ENCODE measurements at regions of chr13 and their contacts with region 1.

Region 1: GRCh38 chr13:46278474-46278873 is 66.7 kb downstream of the LRRC63 start:
- DNase-seq: peak in 1 of 2 experiments; percentile 21
- H3K4me3 ChIP-seq: no peak overlapping the region
- H3K27ac ChIP-seq: no peak overlapping the region
- H3K4me1 ChIP-seq: no peaks in the 10 kb centered on the region
- H3K27me3 ChIP-seq: no peaks in the 10 kb centered on the region
- CTCF ChIP-seq: no peak
- EP300 ChIP-seq: no peak
- POLR2A ChIP-seq: no peak
- RAD21 ChIP-seq: no peak

Region 2: DNA sequence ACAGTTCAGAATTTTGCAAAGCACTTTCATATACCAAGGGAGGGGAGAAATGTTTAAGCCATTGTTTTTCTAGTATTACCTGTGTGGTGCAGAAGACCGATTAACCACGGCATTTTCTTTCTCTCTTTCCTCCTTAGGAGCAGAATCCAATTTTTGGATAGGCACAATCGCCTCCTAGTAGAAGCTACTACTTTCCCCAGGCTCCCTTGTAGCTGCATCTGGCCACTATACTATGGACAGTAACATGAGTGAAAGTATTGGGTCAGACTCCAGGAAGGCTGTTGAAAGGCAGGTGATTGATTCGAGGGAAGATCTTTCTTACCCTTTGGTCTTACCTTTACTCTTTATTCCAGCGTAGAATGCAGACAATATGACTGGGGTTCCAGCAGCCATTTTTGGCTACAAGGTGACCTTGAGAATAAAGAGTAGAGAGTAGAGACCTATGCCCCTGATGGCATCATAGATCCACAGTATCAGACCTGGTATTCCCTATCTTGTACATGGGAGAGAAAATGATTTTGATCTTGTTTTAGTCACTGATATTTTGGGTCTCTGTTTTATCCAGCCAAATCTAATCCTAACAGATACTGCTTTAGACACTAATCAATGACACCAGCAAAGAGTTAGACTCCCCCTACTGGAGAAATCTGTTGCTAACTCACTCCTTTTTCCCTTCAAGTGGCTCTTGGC is 10.2 kb after region 1 on chr13:
- CTCF ChIA-PET with region 1: interaction called, 43 read pairs
- POLR2A ChIA-PET with region 1: no interaction called
- DNase-seq: no peak
- H3K4me3 ChIP-seq: no peak overlapping the region
- H3K27ac ChIP-seq: 0 out of 2 replicates have a peak overlapping the region, but pooled peaks have one; percentile 9
- H3K4me1 ChIP-seq: no peaks in the 10 kb centered on the region
- H3K27me3 ChIP-seq: no peaks in the 10 kb centered on the region
- CTCF ChIP-seq: peak in 2 of 3 experiments; percentile 63 to 75; a peak in 3 of 4 replicates
- EP300 ChIP-seq: no peak
- POLR2A ChIP-seq: no peak
- RAD21 ChIP-seq: peak; percentile 70 to 77

Measured in H1 (cell line).